Naive thymus-derived CD4-positive, alpha-beta T cell (primary cell): ENCODE measurements at regions of chr12 and their contacts with region 1.

Region 1: GRCh38 chr12:7645394-7646177 is 20.1 kb downstream of the APOBEC1 start:
- DNase-seq: peak in 5 of 9 donors; percentile 14 to 39 (median 32)
- ATAC-seq: no peak
- H3K4me3 ChIP-seq: no peak overlapping the region
- H3K4me3 Mint-ChIP-seq: no peak overlapping the region
- H3K27ac ChIP-seq: no peak overlapping the region
- H3K27ac Mint-ChIP-seq: peak overlapping the region in 2 of 9 donors; percentile 16 to 32
- H3K4me1 ChIP-seq: peaks cover 3 to 4% of the 10 kb centered on the region in 2 donors
- H3K4me1 Mint-ChIP-seq: peaks cover 1 to 27% (median 17%) of the 10 kb centered on the region in 7 donors
- H3K27me3 ChIP-seq: no peaks in the 10 kb centered on the region
- H3K27me3 Mint-ChIP-seq: peaks cover 0 to 11% (median 0%) of the 10 kb centered on the region in 5 donors

Region 2: DNA sequence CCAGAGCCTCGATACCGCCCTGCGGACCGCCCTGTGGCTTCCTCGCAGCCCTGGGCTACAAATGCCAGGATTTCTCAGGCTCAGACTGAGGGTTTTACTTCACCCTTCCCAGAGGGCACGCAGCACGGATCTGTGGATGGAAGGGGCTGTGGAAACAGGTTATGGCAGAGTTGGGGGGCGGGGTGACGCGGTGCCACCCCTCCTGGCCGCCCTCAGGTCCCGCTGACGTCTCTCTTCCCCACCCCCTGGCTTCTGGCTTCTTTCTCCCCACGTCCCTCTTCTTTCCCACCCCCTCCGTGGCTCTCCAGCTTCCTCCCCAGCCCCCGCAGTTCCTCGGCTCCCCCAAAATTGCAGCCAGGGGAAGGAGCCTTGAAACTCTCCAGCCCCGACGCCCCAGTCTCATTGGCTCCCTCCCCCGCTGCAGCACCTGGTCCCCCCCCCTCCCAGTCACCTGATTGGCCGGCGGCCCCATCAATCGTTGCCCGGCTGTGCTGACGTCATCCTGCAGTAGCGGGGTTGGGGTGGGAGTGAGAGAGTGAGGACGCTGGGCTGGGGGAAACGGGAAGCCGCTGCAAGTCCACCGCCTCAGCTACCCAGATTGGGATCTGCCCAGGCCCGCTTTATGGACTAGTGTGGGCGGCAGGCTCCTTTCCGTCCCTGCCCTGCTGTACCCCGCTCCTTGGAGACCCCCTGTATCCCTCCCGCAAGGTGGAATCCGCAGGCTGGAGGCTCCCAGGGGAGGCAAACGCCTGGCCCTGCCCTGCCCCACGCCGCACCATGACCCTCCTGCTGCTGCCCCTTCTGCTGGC is 515.5 kb before region 1 on chr12 and contains the start of gene CLSTN3:
- CTCF ChIA-PET with region 1: no interaction called
- POLR2A ChIA-PET with region 1: no interaction called
- intact Hi-C with region 1: loop called in 1 of 2 experiments (anchors 5 kb)
- DNase-seq: peak; percentile 70 to 88 (median 83)
- ATAC-seq: peak; percentile 93
- H3K4me3 ChIP-seq: peak within 1 kb of the TSS; percentile 88
- H3K4me3 Mint-ChIP-seq: peak within 1 kb of the TSS; percentile 94 to 100 (median 96)
- H3K27ac ChIP-seq: peak within 1 kb of the TSS; percentile 73
- H3K27ac Mint-ChIP-seq: peak within 1 kb of the TSS; percentile 73 to 95 (median 92)
- H3K4me1 ChIP-seq: peaks cover 18% of the 10 kb centered on the region in 2 donors
- H3K4me1 Mint-ChIP-seq: peaks cover 29 to 41% (median 34%) of the 10 kb centered on the region in 7 donors
- H3K27me3 ChIP-seq: no peaks in the 10 kb centered on the region
- H3K27me3 Mint-ChIP-seq: no peaks in the 10 kb centered on the region
- total RNA-seq, gene CLSTN3: 20.2 to 76.3 (median 38.7) TPM

Region 3: GRCh38 chr12:7583571-7583970 is 62.0 kb before region 1 on chr12:
- CTCF ChIA-PET with region 1: no interaction called
- POLR2A ChIA-PET with region 1: no interaction called
- intact Hi-C with region 1: loop called in 1 of 2 experiments (anchors 1 kb)
- DNase-seq: no peak
- ATAC-seq: no peak
- H3K4me3 ChIP-seq: no peak overlapping the region
- H3K4me3 Mint-ChIP-seq: no peak overlapping the region
- H3K27ac ChIP-seq: no peak overlapping the region
- H3K27ac Mint-ChIP-seq: no peak overlapping the region
- H3K4me1 ChIP-seq: no peaks in the 10 kb centered on the region
- H3K4me1 Mint-ChIP-seq: peaks cover 0 to 3% (median under 1%) of the 10 kb centered on the region in 7 donors
- H3K27me3 ChIP-seq: no peaks in the 10 kb centered on the region
- H3K27me3 Mint-ChIP-seq: peaks cover 36 to 56% (median 46%) of the 10 kb centered on the region in 5 donors